ENCODE measurements at regions of chr3 and their contacts with region 1.

Region 1: GRCh38 chr3:137013955-137014688 is 56.3 kb downstream of the IL20RB start:
- DNase-seq: peak; percentile 93
- H3K4me3 ChIP-seq: peak overlapping the region; percentile 46
- H3K27ac ChIP-seq: peak overlapping the region; percentile 1
- H3K4me1 ChIP-seq: peaks cover 10% of the 10 kb centered on the region
- H3K27me3 ChIP-seq: no peaks in the 10 kb centered on the region
- CTCF ChIP-seq: peak; percentile 87

Region 2: DNA sequence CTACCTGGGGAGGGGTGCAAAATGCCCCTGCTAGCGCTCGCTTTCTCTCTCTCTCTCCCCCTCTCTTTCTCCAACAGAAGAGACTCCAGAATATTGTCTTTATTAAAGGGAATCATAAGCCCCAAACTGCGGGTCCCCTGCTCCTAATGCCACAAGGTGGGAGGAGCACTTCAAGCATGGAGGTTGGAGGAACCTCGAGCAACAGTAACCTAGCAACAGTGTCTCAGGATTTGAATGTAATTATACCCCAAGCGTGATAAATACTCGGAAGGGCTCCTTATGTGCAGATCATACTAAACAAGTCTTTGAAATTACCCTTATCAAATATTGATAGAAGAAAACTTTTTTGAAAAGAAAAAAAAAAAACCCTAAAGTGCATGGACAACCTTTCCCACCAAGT is 1630.8 kb before region 1 on chr3:
- CTCF ChIA-PET with region 1: no interaction called
- POLR2A ChIA-PET with region 1: no interaction called
- intact Hi-C with region 1: no loop called
- DNase-seq: no peak
- H3K4me3 ChIP-seq: no peak overlapping the region
- H3K27ac ChIP-seq: no peak overlapping the region
- H3K4me1 ChIP-seq: no peaks in the 10 kb centered on the region
- H3K27me3 ChIP-seq: no peaks in the 10 kb centered on the region
- CTCF ChIP-seq: no peak

Region 3: DNA sequence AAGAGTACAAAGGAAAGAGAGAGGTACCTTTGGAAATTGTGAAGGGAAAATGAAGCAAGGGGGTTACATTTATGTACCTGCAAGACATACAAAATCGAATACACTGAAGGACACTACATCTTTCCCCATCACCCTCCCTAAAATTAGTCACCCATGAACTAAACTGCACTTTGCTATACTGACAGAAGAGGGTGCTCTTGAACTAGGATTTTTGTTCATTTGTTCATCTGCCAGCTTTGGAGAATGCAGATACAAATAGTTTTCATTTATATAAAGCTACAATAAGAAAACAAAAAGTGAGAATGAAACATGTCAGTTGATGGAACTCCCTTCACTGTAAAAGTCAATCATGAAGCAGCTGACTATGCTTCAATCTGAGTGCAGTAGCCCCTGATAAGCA is 708.2 kb before region 1 on chr3:
- CTCF ChIA-PET with region 1: interaction called, 5 read pairs
- POLR2A ChIA-PET with region 1: no interaction called
- intact Hi-C with region 1: loop called (anchors 10 kb)
- DNase-seq: peak; percentile 39
- H3K4me3 ChIP-seq: no peak overlapping the region
- H3K27ac ChIP-seq: no peak overlapping the region
- H3K4me1 ChIP-seq: no peaks in the 10 kb centered on the region
- H3K27me3 ChIP-seq: no peaks in the 10 kb centered on the region
- CTCF ChIP-seq: peak; percentile 46

Region 4: DNA sequence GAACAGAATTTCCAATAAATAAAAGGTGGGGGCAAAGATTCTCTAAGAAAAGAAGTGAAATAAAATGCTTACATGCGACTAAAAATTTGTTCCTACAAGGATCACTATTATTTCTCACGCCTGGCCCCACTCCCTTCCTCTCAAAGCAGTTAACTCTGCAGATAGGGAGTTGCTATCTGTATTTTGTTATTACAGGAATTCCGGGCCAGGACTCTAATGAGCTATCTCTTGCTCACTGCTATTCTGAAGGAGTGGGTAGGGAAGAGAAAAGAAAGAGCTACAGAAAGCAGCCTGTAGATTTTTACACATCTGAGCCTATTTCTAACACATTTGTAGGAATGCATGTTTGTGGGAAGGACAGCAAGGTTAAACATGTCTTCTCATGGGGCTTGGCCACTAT is 623.5 kb before region 1 on chr3:
- CTCF ChIA-PET with region 1: interaction called, 9 read pairs
- POLR2A ChIA-PET with region 1: no interaction called
- intact Hi-C with region 1: loop called (anchors 2 kb)
- DNase-seq: no peak
- H3K4me3 ChIP-seq: no peak overlapping the region
- H3K27ac ChIP-seq: no peak overlapping the region
- H3K4me1 ChIP-seq: no peaks in the 10 kb centered on the region
- H3K27me3 ChIP-seq: no peaks in the 10 kb centered on the region
- CTCF ChIP-seq: no peak

Region 5: GRCh38 chr3:136545664-136546268 is 468.4 kb before region 1 on chr3:
- CTCF ChIA-PET with region 1: interaction called, 9 read pairs
- POLR2A ChIA-PET with region 1: no interaction called
- intact Hi-C with region 1: loop called (anchors 5 kb)
- DNase-seq: peak; percentile 41
- H3K4me3 ChIP-seq: no peak overlapping the region
- H3K27ac ChIP-seq: peak overlapping the region; percentile 27
- H3K4me1 ChIP-seq: peaks cover 51% of the 10 kb centered on the region
- H3K27me3 ChIP-seq: no peaks in the 10 kb centered on the region
- CTCF ChIP-seq: peak; percentile 53

Region 6: GRCh38 chr3:136818769-136819391 is 195.2 kb before region 1 on chr3 and contains the start of gene SLC35G2:
- CTCF ChIA-PET with region 1: no interaction called
- POLR2A ChIA-PET with region 1: no interaction called
- intact Hi-C with region 1: loop called (anchors 5 kb)
- DNase-seq: peak; percentile 90
- H3K4me3 ChIP-seq: peak within 1 kb of the TSS; percentile 68
- H3K27ac ChIP-seq: peak within 1 kb of the TSS; percentile 87
- H3K4me1 ChIP-seq: peaks cover 18% of the 10 kb centered on the region
- H3K27me3 ChIP-seq: no peaks in the 10 kb centered on the region
- CTCF ChIP-seq: no peak
- total RNA-seq, gene SLC35G2: 25.0 and 26.4 TPM in 2 replicates

Region 7: GRCh38 chr3:136861890-136862616 is 152.1 kb before region 1 on chr3 and contains the start of gene NCK1:
- CTCF ChIA-PET with region 1: interaction called, 7 read pairs
- POLR2A ChIA-PET with region 1: no interaction called
- intact Hi-C with region 1: loop called (anchors 2 kb)
- DNase-seq: peak; percentile 99
- H3K4me3 ChIP-seq: peak within 1 kb of the TSS; percentile 84
- H3K27ac ChIP-seq: peak within 1 kb of the TSS; percentile 92
- H3K4me1 ChIP-seq: peaks cover 3% of the 10 kb centered on the region
- H3K27me3 ChIP-seq: no peaks in the 10 kb centered on the region
- CTCF ChIP-seq: peak; percentile 45
- total RNA-seq, gene NCK1: 43.7 and 50.2 TPM in 2 replicates

Measured in A673 (cell line).